Activated CD8-positive, alpha-beta T cell treated with anti-CD3 and anti-CD28 coated beads for 36 hours (primary cell): ENCODE measurements at regions of chr10 and their contacts with region 1.

Region 1: DNA sequence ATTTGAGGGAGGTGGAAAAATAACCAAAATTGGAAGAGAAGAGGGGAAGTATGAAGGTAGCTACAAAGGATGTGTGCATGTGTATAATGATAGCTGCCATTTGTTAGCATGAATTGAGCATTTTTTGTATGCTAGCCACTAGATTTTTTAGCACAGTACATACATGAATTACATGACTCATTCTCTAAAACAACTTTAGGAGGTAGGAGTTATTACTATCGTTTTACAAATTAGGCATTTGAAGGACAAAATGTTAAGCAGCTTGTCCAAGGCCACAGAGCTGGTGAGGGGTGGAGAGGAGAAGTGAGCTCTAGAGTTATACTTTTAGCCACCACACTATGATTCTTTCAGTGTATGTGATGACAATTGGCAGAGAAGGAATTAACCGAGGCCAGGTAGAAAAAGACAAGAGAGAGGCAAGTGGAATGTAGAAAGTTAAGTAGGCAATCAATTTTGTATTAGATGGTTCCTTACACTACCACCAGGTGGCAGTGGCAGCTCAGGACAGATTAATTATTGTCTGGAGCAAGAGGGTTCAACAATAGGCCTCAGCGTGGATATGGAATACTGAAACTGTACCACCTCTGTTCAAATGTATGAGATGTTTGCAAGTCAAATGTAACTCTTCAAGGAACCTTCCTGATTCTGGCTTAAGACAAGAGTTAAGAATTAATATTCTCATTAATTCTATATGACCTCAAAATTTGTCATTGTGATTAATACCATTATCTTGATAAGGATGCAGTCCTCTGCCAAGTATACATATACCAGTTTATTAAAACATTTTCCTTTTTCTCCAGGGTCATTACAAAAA is 128.0 kb downstream of the MBL2 start:
- DNase-seq: peak; percentile 38
- ATAC-seq: no peak
- H3K4me3 Mint-ChIP-seq: no peak overlapping the region
- H3K27ac Mint-ChIP-seq: no peak overlapping the region
- H3K4me1 Mint-ChIP-seq: no peaks in the 10 kb centered on the region
- H3K27me3 Mint-ChIP-seq: no peaks in the 10 kb centered on the region
- CTCF ChIP-seq: peak; percentile 65

Region 2: DNA sequence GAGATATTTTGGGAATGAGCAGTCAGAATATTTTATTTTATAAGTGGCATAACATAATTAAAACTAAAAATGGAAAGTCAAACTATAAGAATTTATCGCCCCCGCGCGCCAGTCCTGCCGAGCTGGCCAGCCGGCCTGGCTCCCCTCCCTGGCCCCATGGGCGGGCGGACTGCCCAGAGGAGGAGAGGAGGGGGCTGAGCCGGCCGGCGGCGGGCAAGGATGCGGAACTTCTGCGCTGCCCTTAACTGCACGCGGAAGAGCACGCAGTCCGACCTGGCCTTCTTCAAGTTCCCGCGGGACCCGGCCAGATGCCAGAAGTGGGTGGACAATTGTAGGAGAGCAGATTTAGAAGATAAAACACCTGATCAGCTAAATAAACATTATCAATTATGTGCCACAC is 233.7 kb before region 1 on chr10:
- CTCF ChIA-PET with region 1: no interaction called
- POLR2A ChIA-PET with region 1: no interaction called
- intact Hi-C with region 1: no loop called
- DNase-seq: no peak
- ATAC-seq: no peak
- H3K4me3 Mint-ChIP-seq: no peak overlapping the region
- H3K27ac Mint-ChIP-seq: no peak overlapping the region
- H3K4me1 Mint-ChIP-seq: no peaks in the 10 kb centered on the region
- H3K27me3 Mint-ChIP-seq: no peaks in the 10 kb centered on the region
- CTCF ChIP-seq: no peak

Region 3: GRCh38 chr10:52488606-52489485 is 155.7 kb before region 1 on chr10:
- CTCF ChIA-PET with region 1: no interaction called
- POLR2A ChIA-PET with region 1: no interaction called
- intact Hi-C with region 1: no loop called
- DNase-seq: no peak
- ATAC-seq: no peak
- H3K4me3 Mint-ChIP-seq: no peak overlapping the region
- H3K27ac Mint-ChIP-seq: no peak overlapping the region
- H3K4me1 Mint-ChIP-seq: no peaks in the 10 kb centered on the region
- H3K27me3 Mint-ChIP-seq: no peaks in the 10 kb centered on the region
- CTCF ChIP-seq: peak; percentile 46

Region 4: DNA sequence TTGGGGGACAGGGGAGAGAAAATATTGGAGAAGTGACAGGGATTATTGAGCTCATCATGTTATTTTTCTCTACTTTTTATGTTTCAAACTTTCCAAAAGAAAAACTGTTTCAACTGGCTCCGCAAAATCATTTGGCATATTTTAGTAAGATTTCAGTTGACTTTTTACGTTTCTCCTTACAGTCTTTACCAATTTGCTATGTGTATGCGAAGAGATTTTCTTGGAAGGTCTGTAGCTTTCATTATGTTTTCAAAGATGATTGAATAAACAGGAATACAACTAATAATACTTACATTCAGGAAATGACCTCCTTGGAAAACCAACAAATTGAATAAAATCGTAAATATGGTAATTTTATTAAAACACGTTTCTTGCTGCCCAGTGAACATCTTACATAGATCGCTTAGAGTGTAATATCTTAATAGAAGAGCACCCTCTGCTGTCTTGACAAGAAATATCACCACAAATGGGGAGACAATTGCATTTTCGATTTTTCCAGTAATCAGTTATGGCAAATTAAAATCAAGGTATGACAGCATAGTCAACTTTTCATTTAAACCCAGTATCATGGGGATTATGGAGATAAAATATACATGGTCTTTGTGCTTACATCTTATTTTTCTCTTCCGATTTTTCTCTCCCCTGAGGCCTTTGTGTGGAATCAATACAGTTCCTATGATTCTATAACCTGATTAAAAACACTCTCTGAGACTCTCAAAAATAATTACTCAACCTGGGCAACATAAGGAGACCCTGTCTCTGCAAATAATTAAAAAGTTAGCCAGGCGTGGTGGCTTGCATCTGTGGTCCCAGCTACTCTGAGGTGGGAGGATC is 84.9 kb after region 1 on chr10:
- CTCF ChIA-PET with region 1: interaction called, 6 read pairs
- POLR2A ChIA-PET with region 1: no interaction called
- intact Hi-C with region 1: loop called (anchors 5 kb)
- DNase-seq: no peak
- ATAC-seq: no peak
- H3K4me3 Mint-ChIP-seq: no peak overlapping the region
- H3K27ac Mint-ChIP-seq: no peak overlapping the region
- H3K4me1 Mint-ChIP-seq: no peaks in the 10 kb centered on the region
- H3K27me3 Mint-ChIP-seq: no peaks in the 10 kb centered on the region
- CTCF ChIP-seq: peak; percentile 36

Region 5: DNA sequence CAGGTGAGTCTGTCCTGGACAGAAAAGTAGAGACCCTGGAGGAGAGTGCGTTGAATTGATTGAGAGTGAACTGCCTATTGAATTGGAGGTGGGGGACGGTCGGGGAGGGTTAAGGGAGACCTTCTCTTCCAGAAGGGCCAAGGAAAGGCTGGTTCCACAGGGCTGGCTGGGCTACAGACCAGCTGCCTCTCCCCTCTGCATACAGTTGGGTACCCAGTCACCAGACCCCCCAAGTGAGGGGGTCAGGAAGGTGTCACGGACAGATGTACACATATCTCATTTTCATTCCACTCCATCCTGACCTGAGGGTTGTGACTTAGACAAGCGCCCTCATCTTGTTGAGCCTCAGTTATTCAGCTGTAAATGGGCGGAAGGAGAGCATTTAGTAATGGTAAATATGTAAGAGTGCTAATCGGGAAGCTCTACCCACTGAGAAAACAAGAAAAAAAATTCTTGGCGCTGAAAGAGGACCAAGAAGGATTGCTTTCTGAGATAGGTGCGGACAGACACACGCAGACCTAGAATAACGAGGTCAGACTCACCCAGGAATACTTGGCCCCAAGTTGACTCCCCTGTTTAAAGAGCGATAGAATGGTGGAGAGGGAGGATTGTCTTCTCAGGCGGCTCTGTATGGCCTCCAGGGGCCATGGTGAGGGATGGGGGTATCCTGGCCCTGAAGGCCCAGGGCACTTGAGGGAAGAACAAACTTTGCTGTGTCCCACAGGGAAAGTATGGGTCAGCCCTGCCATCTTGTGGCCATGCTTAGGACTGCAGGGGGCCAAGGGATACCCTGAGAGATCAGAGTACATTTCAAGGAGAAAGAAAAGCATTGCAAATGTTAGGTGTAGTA is 135.2 kb after region 1 on chr10:
- CTCF ChIA-PET with region 1: interaction called, 27 read pairs
- POLR2A ChIA-PET with region 1: no interaction called
- intact Hi-C with region 1: loop called (anchors 5 kb)
- DNase-seq: peak; percentile 65
- ATAC-seq: peak; percentile 76
- H3K4me3 Mint-ChIP-seq: no peak overlapping the region
- H3K27ac Mint-ChIP-seq: no peak overlapping the region
- H3K4me1 Mint-ChIP-seq: no peaks in the 10 kb centered on the region
- H3K27me3 Mint-ChIP-seq: no peaks in the 10 kb centered on the region
- CTCF ChIP-seq: peak; percentile 65

Region 6: DNA sequence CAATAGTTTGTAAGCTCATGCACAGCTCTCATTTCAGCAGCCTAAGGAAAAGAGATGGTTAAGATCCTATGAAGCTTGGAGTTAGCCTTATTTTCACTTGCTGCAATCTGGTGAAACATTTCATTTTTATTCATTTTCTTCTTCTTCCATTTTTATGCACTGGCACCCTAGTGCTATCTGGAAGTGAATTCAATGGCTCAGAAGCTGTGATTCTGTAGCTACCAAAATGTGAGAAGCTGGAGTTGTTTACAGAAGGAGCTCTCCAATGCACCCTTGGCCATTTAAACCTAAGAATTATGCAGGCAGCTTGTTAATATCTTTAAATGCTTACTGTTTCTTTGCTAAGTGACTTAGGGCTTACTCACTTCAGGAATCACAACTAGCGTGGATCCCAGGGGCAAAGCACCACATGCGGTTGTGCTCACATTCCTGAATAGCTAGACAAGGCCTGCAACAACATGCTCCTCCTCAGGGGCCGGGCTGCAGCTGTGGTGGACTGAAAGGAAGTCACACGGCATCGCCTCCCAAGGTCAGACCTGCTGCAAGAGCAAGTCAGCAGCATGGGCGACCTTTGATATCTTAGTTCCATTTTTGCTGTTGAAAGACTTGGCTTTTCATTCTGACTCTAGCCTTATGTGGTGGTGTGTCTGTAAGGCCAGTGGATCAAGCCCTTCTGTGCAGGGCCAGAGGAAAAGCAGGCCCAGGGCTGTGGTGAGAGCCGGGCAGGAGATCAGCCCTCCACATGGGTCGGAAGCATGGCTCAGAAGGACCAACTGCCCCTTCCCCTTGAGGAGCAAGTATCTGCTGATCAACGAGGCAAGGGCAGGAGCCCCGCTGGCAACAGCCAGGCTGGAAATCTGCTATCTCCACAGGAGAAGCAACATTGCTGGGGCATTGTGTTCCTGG is 219.9 kb after region 1 on chr10:
- CTCF ChIA-PET with region 1: no interaction called
- POLR2A ChIA-PET with region 1: no interaction called
- intact Hi-C with region 1: no loop called
- DNase-seq: no peak
- ATAC-seq: no peak
- H3K4me3 Mint-ChIP-seq: no peak overlapping the region
- H3K27ac Mint-ChIP-seq: no peak overlapping the region
- H3K4me1 Mint-ChIP-seq: no peaks in the 10 kb centered on the region
- H3K27me3 Mint-ChIP-seq: no peaks in the 10 kb centered on the region
- CTCF ChIP-seq: no peak